ENCODE measurements at regions of chr19 and their contacts with region 1.

Region 1: DNA sequence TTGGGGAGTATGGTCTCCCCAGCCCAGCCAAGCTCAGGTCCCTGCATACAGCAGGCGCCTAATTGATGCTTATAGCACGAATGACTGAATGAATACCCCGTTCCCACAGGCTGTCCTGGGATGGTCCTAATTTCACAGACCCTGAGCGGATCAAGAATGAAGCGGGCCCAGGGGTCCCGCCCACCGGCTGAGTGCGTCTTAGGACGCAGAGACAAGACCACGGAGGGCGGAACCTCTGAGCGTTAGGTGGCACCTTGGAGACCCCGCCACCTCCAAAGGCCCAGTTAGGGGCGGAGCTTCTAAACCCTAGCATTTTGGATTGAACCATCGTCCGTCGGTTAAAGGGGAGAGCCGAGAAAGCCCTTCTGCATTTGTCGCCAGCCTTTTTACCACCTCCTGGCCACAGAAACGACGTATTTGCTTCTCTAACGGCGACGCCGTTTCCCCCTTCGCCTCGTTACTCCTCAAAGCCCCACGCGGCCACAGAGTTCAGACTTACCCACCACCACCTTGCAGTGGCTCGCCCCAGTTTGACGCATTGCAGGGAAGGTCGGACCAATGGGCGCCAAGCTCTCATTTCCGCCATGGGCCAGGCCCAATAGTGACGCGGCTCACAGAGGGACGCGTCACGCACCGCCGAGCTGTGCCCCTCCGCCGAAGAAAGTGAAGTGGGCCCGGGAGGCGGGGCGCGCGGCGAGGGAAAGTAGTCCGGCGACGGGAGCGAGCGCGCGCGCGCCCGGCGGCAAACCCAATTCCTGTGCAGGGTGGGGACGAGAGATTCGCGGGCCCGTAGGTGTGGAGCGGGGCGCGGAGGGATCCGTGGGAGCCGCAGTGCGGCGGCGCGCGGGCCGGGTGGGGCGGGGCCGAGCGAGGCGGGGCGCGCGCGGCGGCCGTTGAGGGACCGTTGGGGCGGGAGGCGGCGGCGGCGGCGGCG is 479 bp upstream of the CALM3 start:
- DNase-seq: peak; percentile 98
- H3K4me3 ChIP-seq: peak overlapping the region; percentile 71 to 100 (median 100)
- H3K27ac ChIP-seq: peak overlapping the region; percentile 97 to 100 (median 98)
- H3K4me1 ChIP-seq: peaks cover 19 to 42% (median 29%) of the 10 kb centered on the region in 4 donors
- H3K27me3 ChIP-seq: no peaks in the 10 kb centered on the region
- CTCF ChIP-seq: peak in 2 of 5 experiments; percentile 9 to 14
- EP300 ChIP-seq: no peak
- POLR2A ChIP-seq: peak; percentile 84

Region 2: DNA sequence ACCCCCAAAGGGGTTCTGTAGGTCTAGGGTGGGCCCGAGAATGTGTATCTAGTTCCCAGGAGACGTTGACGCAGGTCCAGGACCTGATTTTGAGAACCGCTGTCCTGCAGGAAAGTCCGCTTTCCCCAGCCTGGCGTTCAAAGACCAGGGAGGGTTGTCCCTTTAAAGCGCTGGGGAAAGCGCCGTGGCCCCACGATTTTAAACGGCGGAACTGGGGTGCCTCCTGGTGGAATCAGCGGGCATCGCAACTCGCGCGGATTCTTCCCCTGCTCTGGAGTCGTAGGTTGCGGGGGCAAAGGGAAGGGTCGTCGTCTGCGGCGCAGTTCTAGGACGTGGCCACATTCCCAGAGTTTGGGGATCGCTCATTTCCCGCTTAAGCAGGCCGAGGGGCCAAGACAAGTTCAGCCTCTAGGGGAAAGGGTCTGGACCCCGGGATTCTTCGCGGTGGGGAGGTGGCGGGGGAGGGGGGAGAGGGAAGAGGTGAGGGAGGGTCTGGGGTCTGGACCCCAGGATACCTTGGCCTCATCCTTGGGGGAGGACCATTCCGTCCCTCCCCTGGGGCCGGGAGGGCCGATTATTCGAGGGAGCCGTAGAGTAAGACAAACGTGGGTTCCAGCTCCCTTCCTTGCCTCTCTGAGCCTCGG is 112.7 kb before region 1 on chr19:
- in situ Hi-C with region 1: no loop called
- intact Hi-C with region 1: no loop called
- DNase-seq: peak; percentile 76
- H3K4me3 ChIP-seq: peak overlapping the region in 1 of 4 donors; percentile 40
- H3K27ac ChIP-seq: no peak overlapping the region
- H3K4me1 ChIP-seq: peaks cover 2 to 25% (median 14%) of the 10 kb centered on the region in 4 donors
- H3K27me3 ChIP-seq: peaks cover 73% of the 10 kb centered on the region
- CTCF ChIP-seq: peak; percentile 88 to 96 (median 91)
- EP300 ChIP-seq: no peak
- POLR2A ChIP-seq: no peak

Region 3: GRCh38 chr19:46564701-46565100 is 36.0 kb before region 1 on chr19:
- in situ Hi-C with region 1: no loop called
- intact Hi-C with region 1: no loop called
- DNase-seq: no peak
- H3K4me3 ChIP-seq: no peak overlapping the region
- H3K27ac ChIP-seq: no peak overlapping the region
- H3K4me1 ChIP-seq: no peaks in the 10 kb centered on the region
- H3K27me3 ChIP-seq: no peaks in the 10 kb centered on the region
- CTCF ChIP-seq: no peak
- EP300 ChIP-seq: no peak
- POLR2A ChIP-seq: no peak

Region 4: GRCh38 chr19:46746281-46747013 is 145.8 kb after region 1 on chr19 and contains the start of gene STRN4:
- in situ Hi-C with region 1: no loop called
- intact Hi-C with region 1: loop called (anchors 5 kb)
- DNase-seq: peak; percentile 57
- H3K4me3 ChIP-seq: peak within 1 kb of the TSS; percentile 92 to 100 (median 96)
- H3K27ac ChIP-seq: peak within 1 kb of the TSS; percentile 88 to 96 (median 94)
- H3K4me1 ChIP-seq: peaks cover 11 to 34% (median 19%) of the 10 kb centered on the region in 4 donors
- H3K27me3 ChIP-seq: no peaks in the 10 kb centered on the region
- CTCF ChIP-seq: no peak
- EP300 ChIP-seq: no peak
- POLR2A ChIP-seq: no peak
- total RNA-seq, gene STRN4: 81.6 to 306 (median 174) TPM